ENCODE measurements at regions of chr5 and their contacts with region 1.

Region 1: GRCh38 chr5:139787568-139788293 is 7.9 kb upstream of the PSD2 start:
- DNase-seq: peak; percentile 90
- H3K4me3 ChIP-seq: peak overlapping the region; percentile 83
- H3K27ac ChIP-seq: peak overlapping the region; percentile 84
- H3K4me1 ChIP-seq: peaks cover 19% of the 10 kb centered on the region
- H3K27me3 ChIP-seq: no peaks in the 10 kb centered on the region
- CTCF ChIP-seq: peak; percentile 82

Region 2: DNA sequence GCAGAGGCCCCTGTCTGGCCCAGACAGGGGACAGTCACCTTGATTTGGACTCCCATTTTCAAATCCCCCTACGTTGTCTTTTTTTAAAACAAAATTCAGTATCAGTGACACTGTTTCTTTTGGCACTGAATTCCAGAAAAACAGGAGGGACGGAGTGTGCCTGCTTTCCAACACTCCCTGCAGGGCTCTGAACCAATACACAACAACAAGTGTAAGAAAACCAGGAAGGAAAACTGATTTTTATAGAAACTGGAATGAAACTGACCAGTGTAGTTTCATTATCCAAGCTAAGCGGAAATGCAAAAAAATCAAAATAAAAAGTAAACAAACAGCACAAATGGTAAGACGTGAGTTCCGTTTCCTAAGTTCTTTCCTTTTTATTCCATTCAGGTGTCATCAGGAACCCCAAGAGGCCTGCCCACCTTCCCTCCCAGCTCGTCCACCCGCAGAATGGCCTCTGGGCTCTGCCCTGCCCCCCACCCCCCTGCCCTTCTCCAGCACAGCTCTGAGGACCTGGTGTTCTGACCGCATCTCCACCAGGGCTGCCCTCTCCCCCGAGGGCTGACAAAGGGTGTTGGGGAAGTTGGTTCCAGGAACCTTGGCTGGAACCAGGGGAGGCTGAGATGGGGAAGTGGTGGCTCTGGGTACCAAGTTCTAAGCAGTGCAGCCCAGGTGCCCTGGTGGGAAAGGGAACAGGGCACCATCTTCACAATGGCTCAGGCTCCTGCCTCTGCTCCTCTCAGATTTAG is 81.5 kb after region 1 on chr5:
- intact Hi-C with region 1: loop called (anchors 5 kb)
- DNase-seq: no peak
- H3K4me3 ChIP-seq: no peak overlapping the region
- H3K27ac ChIP-seq: no peak overlapping the region
- H3K4me1 ChIP-seq: peaks cover 8% of the 10 kb centered on the region
- H3K27me3 ChIP-seq: no peaks in the 10 kb centered on the region
- CTCF ChIP-seq: no peak

Region 3: DNA sequence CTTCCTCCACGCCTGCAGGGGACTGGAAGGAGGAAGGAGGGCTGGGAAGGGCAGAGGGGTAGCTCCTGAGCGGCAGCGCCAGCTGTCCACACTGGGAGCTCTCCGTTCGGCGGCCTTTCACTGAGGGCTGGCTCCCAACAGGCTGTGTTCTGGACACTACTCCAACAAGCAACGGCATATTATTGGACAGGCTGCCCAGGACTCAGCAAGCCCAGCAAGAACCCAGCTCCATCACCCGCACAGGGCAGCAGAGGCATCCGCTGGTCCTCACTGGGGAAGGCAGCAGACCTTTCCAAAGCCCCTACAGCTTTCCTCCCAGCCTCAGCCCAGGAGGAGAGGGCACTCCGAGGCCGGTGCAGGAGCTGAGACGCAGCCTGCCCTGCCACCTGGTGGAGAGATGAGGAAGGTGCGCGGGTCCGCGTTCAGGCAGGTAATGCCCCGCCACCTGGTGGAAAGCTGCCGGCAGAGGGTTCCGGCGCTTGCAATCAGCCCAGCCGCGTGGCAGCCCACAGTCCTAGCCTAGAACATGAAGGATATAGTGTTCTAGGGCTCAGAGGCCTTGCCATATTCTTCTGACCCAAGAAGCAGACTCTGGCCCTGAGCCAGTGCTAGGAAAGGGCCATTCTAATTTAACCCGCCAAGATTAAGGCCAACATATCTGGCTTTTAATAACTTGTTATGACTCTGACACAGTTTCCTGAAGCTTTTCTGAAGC is 181.0 kb after region 1 on chr5:
- intact Hi-C with region 1: loop called (anchors 2 kb)
- DNase-seq: peak; percentile 85
- H3K4me3 ChIP-seq: no peak overlapping the region
- H3K27ac ChIP-seq: peak overlapping the region; percentile 24
- H3K4me1 ChIP-seq: peaks cover 42% of the 10 kb centered on the region
- H3K27me3 ChIP-seq: no peaks in the 10 kb centered on the region
- CTCF ChIP-seq: peak; percentile 98